Activated CD4-positive, alpha-beta T cell treated with anti-CD3 and anti-CD28 coated beads for 36 hours (primary cell): ENCODE measurements at regions of chr18 and their contacts with region 1.

Region 1: GRCh38 chr18:23231340-23232021 is 96.2 kb downstream of the CABLES1 start:
- DNase-seq: peak; percentile 87
- ATAC-seq: peak; percentile 90
- H3K4me3 Mint-ChIP-seq: peak overlapping the region; percentile 16
- H3K27ac Mint-ChIP-seq: peak overlapping the region; percentile 97
- H3K4me1 Mint-ChIP-seq: peaks cover 54% of the 10 kb centered on the region
- H3K27me3 Mint-ChIP-seq: no peaks in the 10 kb centered on the region

Region 2: GRCh38 chr18:22977847-22978701 is 253.4 kb before region 1 on chr18:
- CTCF ChIA-PET with region 1: no interaction called
- POLR2A ChIA-PET with region 1: no interaction called
- intact Hi-C with region 1: loop called in 1 of 2 experiments (anchors 5 kb)
- DNase-seq: no peak
- ATAC-seq: peak; percentile 83
- H3K4me3 Mint-ChIP-seq: peak overlapping the region; percentile 46
- H3K27ac Mint-ChIP-seq: peak overlapping the region; percentile 73
- H3K4me1 Mint-ChIP-seq: peaks cover 20% of the 10 kb centered on the region
- H3K27me3 Mint-ChIP-seq: no peaks in the 10 kb centered on the region

Region 3: GRCh38 chr18:23131693-23132319 is 99.7 kb before region 1 on chr18:
- CTCF ChIA-PET with region 1: interaction called, 4 read pairs
- POLR2A ChIA-PET with region 1: no interaction called
- intact Hi-C with region 1: loop called (anchors 2 to 10 kb)
- DNase-seq: peak; percentile 69
- ATAC-seq: no peak
- H3K4me3 Mint-ChIP-seq: no peak overlapping the region
- H3K27ac Mint-ChIP-seq: no peak overlapping the region
- H3K4me1 Mint-ChIP-seq: peaks cover 12% of the 10 kb centered on the region
- H3K27me3 Mint-ChIP-seq: peaks cover 17% of the 10 kb centered on the region

Region 4: GRCh38 chr18:23283916-23284430 is 52.5 kb after region 1 on chr18:
- CTCF ChIA-PET with region 1: no interaction called
- POLR2A ChIA-PET with region 1: no interaction called
- intact Hi-C with region 1: loop called in 1 of 2 experiments (anchors 2 kb)
- DNase-seq: peak; percentile 61
- ATAC-seq: peak; percentile 89
- H3K4me3 Mint-ChIP-seq: no peak overlapping the region
- H3K27ac Mint-ChIP-seq: peak overlapping the region; percentile 59
- H3K4me1 Mint-ChIP-seq: peaks cover 17% of the 10 kb centered on the region
- H3K27me3 Mint-ChIP-seq: no peaks in the 10 kb centered on the region

Region 5: GRCh38 chr18:23377669-23378301 is 146.3 kb after region 1 on chr18:
- CTCF ChIA-PET with region 1: no interaction called
- POLR2A ChIA-PET with region 1: no interaction called
- intact Hi-C with region 1: loop called in 1 of 2 experiments (anchors 1 kb)
- DNase-seq: peak; percentile 11
- ATAC-seq: peak; percentile 89
- H3K4me3 Mint-ChIP-seq: no peak overlapping the region
- H3K27ac Mint-ChIP-seq: peak overlapping the region; percentile 69
- H3K4me1 Mint-ChIP-seq: peaks cover 16% of the 10 kb centered on the region
- H3K27me3 Mint-ChIP-seq: no peaks in the 10 kb centered on the region

Region 6: GRCh38 chr18:23452728-23453679 is 221.5 kb after region 1 on chr18 and contains the start of gene RIOK3:
- CTCF ChIA-PET with region 1: interaction called, 3 read pairs
- POLR2A ChIA-PET with region 1: no interaction called
- intact Hi-C with region 1: loop called in 1 of 2 experiments (anchors 5 kb)
- DNase-seq: peak; percentile 96
- ATAC-seq: peak; percentile 98
- H3K4me3 Mint-ChIP-seq: peak within 1 kb of the TSS; percentile 99
- H3K27ac Mint-ChIP-seq: peak within 1 kb of the TSS; percentile 81
- H3K4me1 Mint-ChIP-seq: peaks cover 42% of the 10 kb centered on the region
- H3K27me3 Mint-ChIP-seq: no peaks in the 10 kb centered on the region
- total RNA-seq, gene RIOK3: 71.1 to 71.2 TPM

Region 7: GRCh38 chr18:23586249-23587196 is 355.0 kb after region 1 on chr18 and contains the start of gene NPC1:
- CTCF ChIA-PET with region 1: no interaction called
- POLR2A ChIA-PET with region 1: no interaction called
- intact Hi-C with region 1: loop called in 1 of 2 experiments (anchors 2 kb)
- DNase-seq: peak; percentile 95
- ATAC-seq: peak; percentile 95
- H3K4me3 Mint-ChIP-seq: peak within 1 kb of the TSS; percentile 94
- H3K27ac Mint-ChIP-seq: peak within 1 kb of the TSS; percentile 91
- H3K4me1 Mint-ChIP-seq: peaks cover 39% of the 10 kb centered on the region
- H3K27me3 Mint-ChIP-seq: no peaks in the 10 kb centered on the region
- total RNA-seq, gene NPC1: 21.6 to 29.2 TPM